GM12878 (cell line): ENCODE measurements at regions of chr3 and their contacts with region 1.

Region 1: GRCh38 chr3:107574650-107575049 is 51.9 kb downstream of the BBX start:
- DNase-seq: no peak
- ATAC-seq: peak; percentile 89
- H3K4me3 ChIP-seq: no peak overlapping the region
- H3K27ac ChIP-seq: no peak overlapping the region
- H3K4me1 ChIP-seq: no peaks in the 10 kb centered on the region
- H3K27me3 ChIP-seq: no peaks in the 10 kb centered on the region
- CTCF ChIP-seq: peak; percentile 45 to 70 (median 47); a peak in 5 of 6 replicates
- EP300 ChIP-seq: no peak
- POLR2A ChIP-seq: no peak
- RAD21 ChIP-seq: peak; percentile 85

Region 2: DNA sequence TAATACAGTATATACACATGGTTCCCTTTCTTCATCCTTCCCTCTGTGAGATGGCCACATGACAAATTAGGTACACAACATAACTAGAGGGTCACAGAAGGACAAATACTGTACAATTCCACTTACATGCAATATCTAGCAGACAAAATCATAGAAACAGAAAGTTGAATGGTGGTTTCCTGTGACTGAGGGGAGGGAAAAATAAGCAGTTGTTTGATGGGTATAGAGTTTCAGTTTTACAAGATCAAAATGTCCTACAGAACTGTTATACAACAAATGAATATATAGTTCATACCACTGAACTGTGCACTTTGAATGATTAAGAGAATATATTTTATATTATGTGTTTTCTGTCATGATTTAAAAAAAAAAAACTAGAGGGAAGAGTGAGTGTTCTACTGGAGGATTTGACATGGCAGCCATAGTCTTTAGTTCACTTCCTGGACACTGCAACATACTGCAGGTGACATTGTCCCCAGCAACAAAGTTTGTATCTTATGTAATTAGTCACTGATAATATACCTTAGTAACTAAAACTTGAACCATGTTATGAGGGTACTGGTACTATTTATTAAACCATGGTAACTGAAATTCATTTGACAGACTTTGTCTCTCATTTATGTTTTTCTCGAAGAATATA is 160.2 kb before region 1 on chr3:
- CTCF ChIA-PET with region 1: no interaction called
- POLR2A ChIA-PET with region 1: no interaction called
- RAD21 ChIA-PET with region 1: no interaction called
- SMC1A ChIA-PET with region 1: no interaction called
- in situ Hi-C with region 1: no loop called
- intact Hi-C with region 1: no loop called
- DNase-seq: no peak
- ATAC-seq: peak; percentile 83
- H3K4me3 ChIP-seq: no peak overlapping the region
- H3K27ac ChIP-seq: no peak overlapping the region
- H3K4me1 ChIP-seq: no peaks in the 10 kb centered on the region
- H3K27me3 ChIP-seq: no peaks in the 10 kb centered on the region
- CTCF ChIP-seq: no peak
- EP300 ChIP-seq: no peak
- POLR2A ChIP-seq: no peak
- RAD21 ChIP-seq: no peak

Region 3: GRCh38 chr3:107496855-107497254 is 77.8 kb before region 1 on chr3:
- CTCF ChIA-PET with region 1: no interaction called
- POLR2A ChIA-PET with region 1: no interaction called
- RAD21 ChIA-PET with region 1: no interaction called
- SMC1A ChIA-PET with region 1: no interaction called
- in situ Hi-C with region 1: no loop called
- intact Hi-C with region 1: no loop called
- DNase-seq: no peak
- ATAC-seq: no peak
- H3K4me3 ChIP-seq: no peak overlapping the region
- H3K27ac ChIP-seq: no peak overlapping the region
- H3K4me1 ChIP-seq: no peaks in the 10 kb centered on the region
- H3K27me3 ChIP-seq: no peaks in the 10 kb centered on the region
- CTCF ChIP-seq: no peak
- EP300 ChIP-seq: no peak
- POLR2A ChIP-seq: no peak
- RAD21 ChIP-seq: no peak

Region 4: DNA sequence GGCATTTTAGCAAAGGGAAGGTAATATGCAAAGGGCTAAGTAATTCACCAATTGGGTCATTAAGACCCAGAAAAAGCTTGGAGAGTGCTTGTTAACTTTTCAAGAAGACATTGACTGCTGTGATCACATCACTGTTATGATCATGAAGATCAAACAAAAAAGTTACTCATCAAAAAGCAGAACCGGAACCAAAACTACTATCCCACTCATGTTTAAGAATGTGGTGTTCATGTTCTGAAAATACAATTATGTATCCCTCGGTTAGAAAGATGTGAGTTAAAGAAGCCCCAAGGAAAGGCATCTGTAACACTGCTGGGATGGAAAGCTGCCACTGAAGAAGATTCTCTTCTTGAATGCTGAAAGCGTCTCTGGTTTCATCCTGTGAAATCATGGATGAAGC is 19.3 kb before region 1 on chr3:
- CTCF ChIA-PET with region 1: interaction called, 20 read pairs
- POLR2A ChIA-PET with region 1: no interaction called
- RAD21 ChIA-PET with region 1: no interaction called
- SMC1A ChIA-PET with region 1: interaction called, 4 read pairs
- in situ Hi-C with region 1: no loop called
- intact Hi-C with region 1: no loop called
- DNase-seq: no peak
- ATAC-seq: peak; percentile 63
- H3K4me3 ChIP-seq: no peak overlapping the region
- H3K27ac ChIP-seq: no peak overlapping the region
- H3K4me1 ChIP-seq: peaks cover 5% of the 10 kb centered on the region; the same call in 1 of the 2 replicates
- H3K27me3 ChIP-seq: no peaks in the 10 kb centered on the region
- CTCF ChIP-seq: no peak
- EP300 ChIP-seq: no peak
- POLR2A ChIP-seq: no peak
- RAD21 ChIP-seq: no peak

Region 5: GRCh38 chr3:107619549-107619948 is 44.9 kb after region 1 on chr3:
- CTCF ChIA-PET with region 1: interaction called, 17 read pairs
- POLR2A ChIA-PET with region 1: no interaction called
- RAD21 ChIA-PET with region 1: no interaction called
- SMC1A ChIA-PET with region 1: interaction called, 5 read pairs
- in situ Hi-C with region 1: no loop called
- intact Hi-C with region 1: no loop called
- DNase-seq: no peak
- ATAC-seq: no peak
- H3K4me3 ChIP-seq: peak overlapping the region; percentile 43; the same call in 1 of the 2 replicates
- H3K27ac ChIP-seq: no peak overlapping the region
- H3K4me1 ChIP-seq: peaks cover 15% of the 10 kb centered on the region
- H3K27me3 ChIP-seq: no peaks in the 10 kb centered on the region
- CTCF ChIP-seq: no peak
- EP300 ChIP-seq: no peak
- POLR2A ChIP-seq: no peak
- RAD21 ChIP-seq: no peak

Region 6: DNA sequence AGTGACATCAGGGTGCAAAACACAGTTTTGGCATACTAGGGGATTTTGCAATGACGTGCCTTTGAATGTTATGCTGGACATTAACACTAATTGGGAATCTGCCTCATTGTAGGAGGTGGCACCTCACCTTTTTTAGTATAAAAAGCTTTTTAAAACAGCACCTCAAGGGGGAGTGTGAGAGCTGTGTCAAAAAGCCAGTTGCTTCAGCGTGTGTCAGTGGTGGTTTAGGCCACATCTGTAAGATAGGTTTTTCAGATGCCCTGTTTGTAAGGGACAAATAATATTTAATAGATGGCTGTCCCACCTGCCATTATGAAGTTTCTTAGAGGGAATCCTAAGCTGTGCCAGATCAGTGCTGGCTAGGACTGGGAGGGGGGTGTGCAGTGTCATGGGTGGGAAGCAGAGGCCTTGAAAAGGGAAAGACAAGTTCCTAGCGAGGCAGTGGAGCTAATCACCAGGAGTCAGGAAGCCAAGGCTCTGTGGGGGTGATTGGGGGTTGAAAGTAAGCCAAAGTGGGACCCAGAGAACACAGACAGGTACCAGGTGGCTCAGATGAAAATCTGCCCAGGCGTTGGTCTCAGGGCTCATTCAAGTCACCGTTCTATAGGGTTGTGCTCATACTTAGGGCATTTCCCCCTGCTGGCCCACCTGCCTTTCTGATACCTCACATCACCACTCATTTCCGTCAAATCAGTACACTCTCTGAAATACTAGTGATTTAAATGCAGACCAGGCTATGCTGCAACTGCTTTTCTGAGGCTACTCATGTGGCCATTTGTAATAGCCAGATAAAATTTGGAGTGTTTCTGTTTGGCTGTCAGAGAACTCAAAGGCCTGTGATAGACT is 68.6 kb after region 1 on chr3:
- CTCF ChIA-PET with region 1: interaction called, 18 read pairs
- POLR2A ChIA-PET with region 1: no interaction called
- RAD21 ChIA-PET with region 1: no interaction called
- SMC1A ChIA-PET with region 1: interaction called, 7 read pairs
- in situ Hi-C with region 1: no loop called
- intact Hi-C with region 1: no loop called
- DNase-seq: no peak
- ATAC-seq: peak; percentile 87
- H3K4me3 ChIP-seq: no peak overlapping the region
- H3K27ac ChIP-seq: no peak overlapping the region
- H3K4me1 ChIP-seq: peaks cover 14% of the 10 kb centered on the region
- H3K27me3 ChIP-seq: no peaks in the 10 kb centered on the region
- CTCF ChIP-seq: peak; percentile 34 to 53 (median 48); a peak in 5 of 6 replicates
- EP300 ChIP-seq: no peak
- POLR2A ChIP-seq: no peak
- RAD21 ChIP-seq: peak; percentile 58

Region 7: DNA sequence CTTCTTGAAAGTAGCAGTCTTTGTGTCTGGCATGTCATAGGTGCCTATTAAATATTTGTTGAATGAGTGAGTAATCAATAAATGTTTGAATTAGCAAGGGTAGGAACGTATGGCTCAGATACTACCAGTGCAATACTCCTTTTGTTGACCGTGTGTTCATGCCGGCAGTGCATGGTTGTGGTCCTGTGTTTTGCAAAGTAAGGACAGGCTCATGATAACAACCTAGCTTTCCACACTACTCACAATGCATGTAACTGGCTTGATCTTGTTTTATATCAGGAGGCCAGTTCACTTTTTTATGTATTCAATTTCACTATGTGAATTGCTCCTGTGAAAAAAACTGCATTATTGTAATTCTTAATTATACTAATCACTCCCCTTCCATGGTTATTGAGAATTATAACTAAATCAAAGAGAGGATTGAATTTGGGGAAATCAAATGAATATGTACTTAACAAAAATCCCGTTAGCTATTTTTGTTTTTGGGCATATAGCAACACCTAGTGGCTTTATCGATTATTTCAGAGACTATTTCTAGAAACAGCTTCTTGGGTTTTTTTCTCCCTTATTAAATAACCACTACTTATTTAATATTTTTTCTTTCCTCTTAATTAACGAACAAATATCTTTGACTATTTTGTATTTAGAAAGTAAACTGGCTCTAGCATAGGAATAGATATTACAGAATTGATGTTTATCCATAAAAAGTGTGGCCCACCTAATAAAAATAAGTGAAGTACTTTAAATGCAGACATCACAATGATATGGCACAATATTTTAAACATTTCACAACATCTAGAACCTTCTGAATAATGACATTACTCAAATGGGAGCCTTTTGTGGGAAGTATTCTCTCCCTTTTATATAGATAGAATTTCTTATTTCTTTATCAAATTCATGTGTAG is 166.6 kb after region 1 on chr3:
- CTCF ChIA-PET with region 1: interaction called, 18 read pairs
- POLR2A ChIA-PET with region 1: no interaction called
- RAD21 ChIA-PET with region 1: interaction called, 25 read pairs
- SMC1A ChIA-PET with region 1: interaction called, 49 read pairs
- in situ Hi-C with region 1: loop called (anchors 10 kb)
- intact Hi-C with region 1: loop called (anchors 2 kb)
- DNase-seq: no peak
- ATAC-seq: no peak
- H3K4me3 ChIP-seq: no peak overlapping the region
- H3K27ac ChIP-seq: no peak overlapping the region
- H3K4me1 ChIP-seq: no peaks in the 10 kb centered on the region
- H3K27me3 ChIP-seq: no peaks in the 10 kb centered on the region
- CTCF ChIP-seq: peak in 2 of 3 experiments; percentile 21 to 36; a peak in 3 of 6 replicates
- EP300 ChIP-seq: no peak
- POLR2A ChIP-seq: no peak
- RAD21 ChIP-seq: peak; percentile 67

Region 8: GRCh38 chr3:107927361-107928083 is 352.9 kb after region 1 on chr3:
- CTCF ChIA-PET with region 1: interaction called, 9 read pairs
- POLR2A ChIA-PET with region 1: no interaction called
- RAD21 ChIA-PET with region 1: no interaction called
- SMC1A ChIA-PET with region 1: interaction called, 4 read pairs
- in situ Hi-C with region 1: no loop called
- intact Hi-C with region 1: loop called (anchors 5 kb)
- DNase-seq: no peak
- ATAC-seq: peak; percentile 99
- H3K4me3 ChIP-seq: peak overlapping the region; percentile 57; the same call in 1 of the 2 replicates
- H3K27ac ChIP-seq: no peak overlapping the region
- H3K4me1 ChIP-seq: peaks cover 3% of the 10 kb centered on the region; the same call in 1 of the 2 replicates
- H3K27me3 ChIP-seq: peaks cover 0 to 5% of the 10 kb centered on the region in 2 experiments; a peak in 3 of 4 replicates
- CTCF ChIP-seq: peak; percentile 77 to 93 (median 91)
- EP300 ChIP-seq: no peak
- POLR2A ChIP-seq: no peak
- RAD21 ChIP-seq: peak; percentile 60